Activated B cell treated with CpG ODN at 0.5 μM for 24 hours (primary cell): ENCODE measurements at regions of chr7 and their contacts with region 1.

Region 1: GRCh38 chr7:100563809-100564400 is 9.8 kb downstream of the SAP25 start:
- DNase-seq: peak; percentile 79
- ATAC-seq: peak; percentile 78
- H3K4me3 Mint-ChIP-seq: no peak overlapping the region
- H3K27ac Mint-ChIP-seq: no peak overlapping the region
- H3K4me1 Mint-ChIP-seq: peaks cover 25% of the 10 kb centered on the region
- H3K27me3 Mint-ChIP-seq: no peaks in the 10 kb centered on the region
- CTCF ChIP-seq: peak; percentile 90

Region 2: GRCh38 chr7:100545360-100546128 is 18.4 kb before region 1 on chr7:
- CTCF ChIA-PET with region 1: interaction called, 13 read pairs
- POLR2A ChIA-PET with region 1: interaction called, 10 read pairs
- intact Hi-C with region 1: loop called (anchors 1 kb)
- DNase-seq: no peak
- ATAC-seq: peak; percentile 59
- H3K4me3 Mint-ChIP-seq: peak overlapping the region; percentile 32
- H3K27ac Mint-ChIP-seq: peak overlapping the region; percentile 80
- H3K4me1 Mint-ChIP-seq: peaks cover 77% of the 10 kb centered on the region
- H3K27me3 Mint-ChIP-seq: no peaks in the 10 kb centered on the region
- CTCF ChIP-seq: no peak

Region 3: GRCh38 chr7:100604028-100604975 is 40.4 kb after region 1 on chr7:
- CTCF ChIA-PET with region 1: interaction called, 3 read pairs
- POLR2A ChIA-PET with region 1: no interaction called
- intact Hi-C with region 1: loop called (anchors 1 kb)
- DNase-seq: peak; percentile 75
- ATAC-seq: peak; percentile 78
- H3K4me3 Mint-ChIP-seq: peak overlapping the region; percentile 85
- H3K27ac Mint-ChIP-seq: peak overlapping the region; percentile 30
- H3K4me1 Mint-ChIP-seq: peaks cover 19% of the 10 kb centered on the region
- H3K27me3 Mint-ChIP-seq: no peaks in the 10 kb centered on the region
- CTCF ChIP-seq: no peak

Region 4: DNA sequence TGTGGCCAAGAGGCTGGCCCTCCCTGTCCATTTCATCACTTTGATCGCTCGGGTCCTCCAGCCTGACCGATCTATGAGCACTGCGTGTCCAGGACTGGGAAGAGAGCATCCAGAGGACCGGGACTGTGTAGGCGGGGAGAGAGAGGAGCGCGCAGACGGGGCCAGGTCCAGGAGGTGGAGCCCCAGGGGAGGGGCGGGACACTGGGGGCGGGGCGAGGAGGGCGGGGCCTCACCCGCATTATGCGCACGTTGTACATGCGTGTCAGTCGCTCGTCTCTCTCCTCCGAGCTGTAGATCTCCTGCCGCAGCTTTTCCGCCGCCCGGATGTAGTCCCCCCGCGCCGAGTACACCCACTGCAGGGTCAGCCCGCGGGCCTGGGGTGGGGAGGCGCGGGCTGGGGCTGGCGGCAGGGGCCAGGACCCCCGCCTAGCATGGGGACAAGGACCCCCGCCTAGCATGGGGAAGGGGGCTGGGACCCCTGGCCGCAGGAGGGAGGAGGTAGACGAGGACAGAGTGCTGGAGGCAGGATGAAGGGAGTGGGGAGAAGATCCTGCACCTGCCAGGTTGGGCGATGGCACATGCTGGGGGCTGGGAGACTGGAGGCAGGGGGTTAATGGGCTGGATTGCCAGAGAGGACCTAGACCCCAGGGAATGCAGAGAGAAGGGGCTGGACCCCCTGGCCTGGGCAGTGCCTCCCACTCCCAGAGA is 62.8 kb after region 1 on chr7:
- CTCF ChIA-PET with region 1: interaction called, 4 read pairs
- POLR2A ChIA-PET with region 1: no interaction called
- intact Hi-C with region 1: loop called (anchors 2 kb)
- DNase-seq: peak; percentile 58
- ATAC-seq: peak; percentile 100
- H3K4me3 Mint-ChIP-seq: peak overlapping the region; percentile 67
- H3K27ac Mint-ChIP-seq: no peak overlapping the region
- H3K4me1 Mint-ChIP-seq: peaks cover 10% of the 10 kb centered on the region
- H3K27me3 Mint-ChIP-seq: no peaks in the 10 kb centered on the region
- CTCF ChIP-seq: no peak

Region 5: DNA sequence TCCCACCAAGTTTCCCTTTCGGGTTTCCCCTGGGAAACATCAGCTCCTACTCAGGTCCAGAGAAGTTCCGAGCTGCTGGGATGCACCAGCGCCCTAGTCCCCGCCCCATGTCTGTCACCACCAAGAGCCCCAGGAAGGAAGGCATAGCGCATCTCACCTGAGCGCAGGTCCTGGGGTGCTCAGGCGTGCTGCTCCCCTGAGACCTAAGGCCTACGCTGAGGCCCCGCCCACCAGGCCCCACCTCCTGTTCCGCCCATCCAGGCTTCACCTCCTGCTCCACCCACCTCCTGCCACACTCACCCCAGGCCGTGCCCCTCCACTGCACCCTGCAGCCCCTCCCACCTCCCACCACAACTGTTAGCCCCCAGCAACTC is 78.6 kb after region 1 on chr7:
- CTCF ChIA-PET with region 1: no interaction called
- POLR2A ChIA-PET with region 1: interaction called, 12 read pairs
- intact Hi-C with region 1: no loop called
- DNase-seq: peak; percentile 34
- ATAC-seq: peak; percentile 93
- H3K4me3 Mint-ChIP-seq: no peak overlapping the region
- H3K27ac Mint-ChIP-seq: no peak overlapping the region
- H3K4me1 Mint-ChIP-seq: peaks cover 9% of the 10 kb centered on the region
- H3K27me3 Mint-ChIP-seq: peaks cover 19% of the 10 kb centered on the region
- CTCF ChIP-seq: no peak

Region 6: GRCh38 chr7:100726996-100727761 is 163.3 kb after region 1 on chr7:
- CTCF ChIA-PET with region 1: interaction called, 7 read pairs
- POLR2A ChIA-PET with region 1: no interaction called
- intact Hi-C with region 1: loop called (anchors 1 kb)
- DNase-seq: no peak
- ATAC-seq: no peak
- H3K4me3 Mint-ChIP-seq: no peak overlapping the region
- H3K27ac Mint-ChIP-seq: no peak overlapping the region
- H3K4me1 Mint-ChIP-seq: peaks cover 5% of the 10 kb centered on the region
- H3K27me3 Mint-ChIP-seq: peaks cover 19% of the 10 kb centered on the region
- CTCF ChIP-seq: no peak